Activated CD4-positive, alpha-beta memory T cell treated with anti-CD3 and anti-CD28 coated beads for 36 hours (primary cell): ENCODE measurements at regions of chr10 and their contacts with region 1.

Region 1: GRCh38 chr10:49606981-49607535 is 3.1 kb upstream of the SLC18A3 start:
- DNase-seq: peak; percentile 81
- H3K4me3 Mint-ChIP-seq: no peak overlapping the region
- H3K27ac Mint-ChIP-seq: no peak overlapping the region
- H3K4me1 Mint-ChIP-seq: peaks cover 2% of the 10 kb centered on the region
- H3K27me3 Mint-ChIP-seq: peaks cover 65% of the 10 kb centered on the region

Region 2: GRCh38 chr10:49398000-49398861 is 208.8 kb before region 1 on chr10:
- CTCF ChIA-PET with region 1: no interaction called
- POLR2A ChIA-PET with region 1: no interaction called
- intact Hi-C with region 1: loop called (anchors 5 kb)
- DNase-seq: peak; percentile 70
- H3K4me3 Mint-ChIP-seq: peak overlapping the region; percentile 2
- H3K27ac Mint-ChIP-seq: no peak overlapping the region
- H3K4me1 Mint-ChIP-seq: peaks cover 12% of the 10 kb centered on the region
- H3K27me3 Mint-ChIP-seq: peaks cover 66% of the 10 kb centered on the region

Region 3: GRCh38 chr10:49761789-49762565 is 154.9 kb after region 1 on chr10 and contains the start of gene OGDHL:
- CTCF ChIA-PET with region 1: no interaction called
- POLR2A ChIA-PET with region 1: no interaction called
- intact Hi-C with region 1: loop called (anchors 2 kb)
- DNase-seq: peak; percentile 62
- H3K4me3 Mint-ChIP-seq: peak within 1 kb of the TSS; percentile 23
- H3K27ac Mint-ChIP-seq: no peak within 1 kb of the TSS
- H3K4me1 Mint-ChIP-seq: peaks cover 3% of the 10 kb centered on the region
- H3K27me3 Mint-ChIP-seq: peaks cover 36% of the 10 kb centered on the region
- total RNA-seq, gene OGDHL: 0.36 to 0.40 TPM

Region 4: DNA sequence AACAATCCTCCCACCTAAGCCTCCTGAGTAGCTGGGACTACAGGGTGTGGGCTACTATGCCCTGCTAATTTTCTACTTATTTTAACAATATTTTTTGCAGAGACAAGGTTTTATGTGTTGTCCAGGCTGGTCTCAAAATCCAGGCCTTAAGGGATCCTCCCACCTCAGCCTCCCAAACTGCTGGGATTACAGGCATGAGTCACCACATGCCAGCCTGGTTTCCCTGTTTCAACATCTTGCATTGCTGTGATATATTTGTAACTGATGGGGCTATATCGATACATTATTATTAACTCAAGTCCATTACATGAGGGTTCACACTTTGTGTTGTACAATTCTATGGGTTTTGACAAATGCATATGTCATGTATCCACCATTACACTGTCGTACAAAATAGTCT is 196.9 kb after region 1 on chr10:
- CTCF ChIA-PET with region 1: no interaction called
- POLR2A ChIA-PET with region 1: no interaction called
- intact Hi-C with region 1: no loop called
- DNase-seq: no peak
- H3K4me3 Mint-ChIP-seq: no peak overlapping the region
- H3K27ac Mint-ChIP-seq: no peak overlapping the region
- H3K4me1 Mint-ChIP-seq: no peaks in the 10 kb centered on the region
- H3K27me3 Mint-ChIP-seq: peaks cover 2% of the 10 kb centered on the region

Region 5: GRCh38 chr10:50210876-50211275 is 603.8 kb after region 1 on chr10:
- CTCF ChIA-PET with region 1: no interaction called
- POLR2A ChIA-PET with region 1: no interaction called
- intact Hi-C with region 1: no loop called
- DNase-seq: no peak
- H3K4me3 Mint-ChIP-seq: no peak overlapping the region
- H3K27ac Mint-ChIP-seq: no peak overlapping the region
- H3K4me1 Mint-ChIP-seq: no peaks in the 10 kb centered on the region
- H3K27me3 Mint-ChIP-seq: peaks cover 10% of the 10 kb centered on the region